Posterior cingulate gyrus (tissue), 11 donors: ENCODE measurements at regions of chr14 and their contacts with region 1.

Region 1: GRCh38 chr14:88824314-88825077 is at the start of gene TTC8:
- DNase-seq: peak; percentile 59 to 97 (median 83)

Region 2: DNA sequence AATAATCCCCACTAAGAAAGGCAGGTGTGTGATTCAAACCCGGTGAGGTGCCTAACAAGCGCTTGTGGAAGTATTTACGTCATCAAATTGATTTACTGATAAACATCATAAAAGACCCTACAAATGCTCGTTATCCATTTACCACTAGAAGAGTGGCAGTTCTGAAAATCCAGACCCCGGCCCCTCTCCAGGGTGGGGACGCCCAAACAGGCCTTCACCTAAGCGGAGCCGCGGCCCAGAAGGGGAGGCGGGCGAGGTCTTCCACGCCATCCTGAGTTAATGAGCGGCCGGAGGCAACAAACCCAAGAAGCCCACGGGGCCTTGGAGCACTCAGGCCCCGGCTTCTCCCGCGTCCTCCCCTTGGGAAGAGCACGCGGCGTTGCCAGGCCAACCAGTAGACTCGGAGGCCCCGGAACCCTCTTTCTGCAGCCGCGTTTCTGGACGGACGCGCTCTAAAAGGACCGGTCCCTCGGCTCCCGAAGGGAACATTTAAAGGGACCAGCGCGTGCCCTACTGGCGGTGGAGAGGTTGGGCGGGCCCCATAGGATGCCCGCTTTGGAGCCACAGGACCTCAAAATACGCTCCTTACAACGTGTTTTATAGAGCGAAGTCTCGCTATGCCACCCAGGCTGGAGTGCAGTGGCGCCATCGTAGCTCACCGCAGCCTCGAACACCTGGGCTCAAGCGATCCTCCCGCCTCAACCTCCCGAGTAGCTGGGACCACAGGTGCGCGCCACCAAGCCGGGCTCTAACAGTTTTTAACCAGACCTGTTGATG is 273.2 kb before region 1 on chr14:
- intact Hi-C with region 1: no loop called
- DNase-seq: peak; percentile 80 to 97 (median 86)

Region 3: GRCh38 chr14:88792572-88793258 is 31.8 kb before region 1 on chr14 and contains the start of gene EML5:
- intact Hi-C with region 1: loop called (anchors 2 kb)
- DNase-seq: peak; percentile 68 to 97 (median 82)

Region 4: GRCh38 chr14:88799522-88799921 is 25.0 kb before region 1 on chr14:
- intact Hi-C with region 1: loop called (anchors 1 kb)
- DNase-seq: no peak